Activated naive CD4-positive, alpha-beta T cell treated with anti-CD3 and anti-CD28 coated beads for 36 hours (primary cell): ENCODE measurements at regions of chr4 and their contacts with region 1.

Region 1: DNA sequence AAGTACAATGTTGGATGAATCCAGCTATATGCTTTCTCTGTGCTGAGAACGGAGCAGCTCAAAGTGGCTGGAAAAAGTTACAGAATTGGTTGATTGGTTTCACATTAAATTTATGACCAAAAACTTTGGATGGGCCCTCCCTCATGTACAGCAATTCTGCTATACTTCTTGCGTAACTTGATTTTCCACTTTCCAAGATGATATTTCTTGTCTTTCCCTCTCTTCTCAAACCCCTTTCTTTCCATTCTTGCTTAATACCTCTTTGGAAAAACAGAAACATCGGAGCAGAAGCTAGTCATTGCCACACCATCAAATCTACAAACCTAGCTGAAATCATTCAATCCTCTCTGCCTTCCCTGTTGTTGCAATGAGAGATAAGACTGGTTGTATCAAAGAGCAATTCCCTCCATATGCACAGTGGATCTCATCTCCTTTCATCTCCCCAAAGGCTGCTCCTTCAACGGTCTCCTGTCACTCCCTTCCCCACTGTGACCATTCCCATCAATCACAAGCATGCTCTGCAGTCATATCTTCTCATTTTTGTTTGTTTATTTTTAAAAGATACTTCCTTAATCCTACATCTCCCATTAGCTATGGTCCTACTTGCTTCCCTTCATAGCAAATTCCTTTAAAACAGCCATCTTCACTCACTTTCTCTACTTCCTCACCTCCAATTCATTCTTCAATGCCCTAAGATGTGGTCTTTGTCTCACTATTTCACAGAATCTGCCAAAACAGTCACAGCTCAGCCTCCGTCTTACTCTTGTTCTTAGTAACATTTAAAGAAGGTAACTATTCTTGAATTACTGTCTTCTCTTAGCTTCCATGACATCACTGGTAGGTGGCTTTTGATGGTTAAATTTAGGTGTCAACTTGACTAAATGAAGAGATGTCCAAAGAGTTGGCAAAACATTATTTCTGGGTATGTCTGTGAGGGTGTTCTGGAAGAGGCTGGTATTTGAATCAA is 145.5 kb downstream of the FAM13A start:
- DNase-seq: peak; percentile 41
- H3K4me3 Mint-ChIP-seq: no peak overlapping the region
- H3K27ac Mint-ChIP-seq: no peak overlapping the region
- H3K4me1 Mint-ChIP-seq: no peaks in the 10 kb centered on the region
- H3K27me3 Mint-ChIP-seq: no peaks in the 10 kb centered on the region

Region 2: DNA sequence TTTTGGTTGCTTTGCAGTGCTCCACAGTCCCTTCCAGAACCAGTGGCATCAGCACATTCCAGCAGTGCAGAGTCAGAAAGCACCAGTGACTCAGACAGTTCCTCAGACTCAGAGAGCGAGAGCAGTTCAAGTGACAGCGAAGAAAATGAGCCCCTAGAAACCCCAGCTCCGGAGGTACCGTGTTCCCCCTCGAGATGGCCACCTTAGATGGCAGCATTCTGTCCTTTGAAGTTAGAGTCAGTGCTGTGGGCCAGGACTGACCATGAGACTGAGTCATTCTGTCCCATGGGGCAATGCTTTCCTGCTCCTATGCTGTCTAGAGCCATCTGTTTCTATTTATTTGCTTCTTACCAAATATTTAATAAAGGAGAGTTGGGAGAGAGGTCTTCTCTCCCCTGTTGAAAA is 1803.4 kb before region 1 on chr4:
- CTCF ChIA-PET with region 1: no interaction called
- intact Hi-C with region 1: no loop called
- DNase-seq: no peak
- H3K4me3 Mint-ChIP-seq: no peak overlapping the region
- H3K27ac Mint-ChIP-seq: no peak overlapping the region
- H3K4me1 Mint-ChIP-seq: peaks cover 36% of the 10 kb centered on the region
- H3K27me3 Mint-ChIP-seq: no peaks in the 10 kb centered on the region

Region 3: DNA sequence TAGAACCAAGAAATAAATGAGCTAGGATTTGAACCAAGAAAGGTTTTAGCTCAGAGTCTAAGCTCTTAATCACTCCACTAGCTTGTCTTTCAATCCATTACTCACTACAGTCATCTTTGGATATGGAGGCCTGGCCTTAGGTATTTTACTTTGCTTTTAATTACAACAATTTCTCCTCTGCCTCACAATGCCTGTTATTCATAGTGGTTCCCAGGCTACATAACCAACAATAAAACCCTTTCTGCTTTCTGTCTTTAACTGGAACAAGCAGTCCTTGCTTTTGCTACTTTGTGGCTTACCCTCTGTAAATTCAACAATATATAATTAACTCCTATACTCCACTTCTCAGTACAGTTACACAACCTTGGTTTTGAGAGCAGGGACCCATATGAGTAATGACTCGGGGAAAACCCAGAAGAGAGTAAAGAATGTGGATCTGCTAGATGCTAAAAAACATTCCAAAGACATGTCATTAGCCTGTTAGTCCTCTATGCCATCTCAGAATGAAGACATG is 119.2 kb before region 1 on chr4:
- CTCF ChIA-PET with region 1: no interaction called
- intact Hi-C with region 1: no loop called
- DNase-seq: peak; percentile 23
- H3K4me3 Mint-ChIP-seq: no peak overlapping the region
- H3K27ac Mint-ChIP-seq: peak overlapping the region; percentile 25
- H3K4me1 Mint-ChIP-seq: peaks cover 19% of the 10 kb centered on the region
- H3K27me3 Mint-ChIP-seq: no peaks in the 10 kb centered on the region

Region 4: GRCh38 chr4:89283226-89284009 is 371.9 kb after region 1 on chr4:
- CTCF ChIA-PET with region 1: no interaction called
- intact Hi-C with region 1: loop called (anchors 5 kb)
- DNase-seq: no peak
- H3K4me3 Mint-ChIP-seq: no peak overlapping the region
- H3K27ac Mint-ChIP-seq: peak overlapping the region; percentile 28
- H3K4me1 Mint-ChIP-seq: peaks cover 66% of the 10 kb centered on the region
- H3K27me3 Mint-ChIP-seq: no peaks in the 10 kb centered on the region